ENCODE measurements at regions of chr17 and their contacts with region 1.

Region 1: GRCh38 chr17:78300962-78301822 is 58.7 kb downstream of the SOCS3 start:
- DNase-seq: no peak
- ATAC-seq: peak; percentile 53
- H3K4me3 Mint-ChIP-seq: no peak overlapping the region
- H3K27ac Mint-ChIP-seq: peak overlapping the region; percentile 44
- H3K4me1 Mint-ChIP-seq: peaks cover 9% of the 10 kb centered on the region
- H3K27me3 Mint-ChIP-seq: no peaks in the 10 kb centered on the region

Region 2: GRCh38 chr17:78278139-78279127 is 22.8 kb before region 1 on chr17:
- CTCF ChIA-PET with region 1: no interaction called
- POLR2A ChIA-PET with region 1: no interaction called
- intact Hi-C with region 1: no loop called
- DNase-seq: no peak
- ATAC-seq: peak; percentile 21
- H3K4me3 Mint-ChIP-seq: no peak overlapping the region
- H3K27ac Mint-ChIP-seq: no peak overlapping the region
- H3K4me1 Mint-ChIP-seq: peaks cover 11% of the 10 kb centered on the region
- H3K27me3 Mint-ChIP-seq: no peaks in the 10 kb centered on the region

Region 3: GRCh38 chr17:78412403-78412802 is 111.2 kb after region 1 on chr17:
- CTCF ChIA-PET with region 1: no interaction called
- POLR2A ChIA-PET with region 1: interaction called, 12 read pairs
- intact Hi-C with region 1: no loop called
- DNase-seq: peak; percentile 76
- ATAC-seq: peak; percentile 27
- H3K4me3 Mint-ChIP-seq: peak overlapping the region; percentile 9
- H3K27ac Mint-ChIP-seq: peak overlapping the region; percentile 92
- H3K4me1 Mint-ChIP-seq: peaks cover 78% of the 10 kb centered on the region
- H3K27me3 Mint-ChIP-seq: no peaks in the 10 kb centered on the region